AG04449 (cell line): ENCODE measurements at regions of chr10 and their contacts with region 1.

Region 1: DNA sequence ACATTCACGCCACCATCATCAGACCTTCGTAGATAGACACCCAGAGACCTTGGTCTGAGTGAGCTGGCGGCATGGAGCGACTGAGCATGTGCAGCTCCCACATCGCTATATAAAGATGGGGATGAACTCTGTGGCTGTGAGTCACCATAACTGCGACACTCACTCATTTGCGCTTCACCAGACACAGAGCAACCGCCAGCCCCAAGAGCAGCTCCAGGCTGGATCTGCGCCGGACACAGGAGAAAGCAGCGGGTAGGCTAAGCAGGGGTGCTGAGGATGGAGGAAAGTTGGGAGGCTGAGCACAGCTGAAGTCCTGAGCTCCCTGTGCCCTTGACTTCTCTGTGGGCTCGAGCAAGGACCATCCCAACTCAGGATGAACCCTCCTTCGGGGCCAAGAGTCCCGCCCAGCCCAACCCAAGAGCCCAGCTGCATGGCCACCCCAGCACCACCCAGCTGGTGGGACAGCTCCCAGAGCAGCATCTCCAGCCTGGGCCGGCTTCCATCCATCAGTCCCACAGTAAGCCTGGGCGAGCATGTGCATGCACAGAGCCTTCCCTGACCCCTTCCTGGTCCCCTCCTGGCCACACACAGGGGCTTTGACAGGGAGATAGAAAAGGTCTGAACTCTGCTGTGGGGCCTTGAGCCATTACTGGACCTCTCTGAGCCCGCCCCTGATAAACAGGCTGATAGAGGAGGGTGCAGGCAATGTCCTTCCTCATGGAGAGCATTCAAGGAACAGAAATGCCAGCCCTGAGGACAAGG is at the start of gene OPN4:
- DNase-seq: no peak
- H3K4me3 ChIP-seq: no peak within 1 kb of the TSS
- CTCF ChIP-seq: no peak

Region 2: GRCh38 chr10:86644152-86644793 is 10.3 kb before region 1 on chr10:
- CTCF ChIA-PET with region 1: interaction called, 10 read pairs
- POLR2A ChIA-PET with region 1: no interaction called
- DNase-seq: no peak
- H3K4me3 ChIP-seq: no peak overlapping the region
- CTCF ChIP-seq: peak; percentile 33

Region 3: GRCh38 chr10:86824151-86824550 is 169.6 kb after region 1 on chr10:
- CTCF ChIA-PET with region 1: no interaction called
- POLR2A ChIA-PET with region 1: no interaction called
- DNase-seq: no peak
- H3K4me3 ChIP-seq: no peak overlapping the region
- CTCF ChIP-seq: no peak